ENCODE measurements at regions of chr5 and their contacts with region 1.

Region 1: GRCh38 chr5:134411546-134412266 is at the start of gene CDKN2AIPNL:
- DNase-seq: peak; percentile 34
- ATAC-seq: peak; percentile 99
- H3K4me3 ChIP-seq: peak within 1 kb of the TSS; percentile 85
- H3K27ac ChIP-seq: peak within 1 kb of the TSS; percentile 69
- H3K4me1 ChIP-seq: peaks cover 4% of the 10 kb centered on the region; the same call in 1 of the 2 replicates
- H3K27me3 ChIP-seq: no peaks in the 10 kb centered on the region
- CTCF ChIP-seq: peak; percentile 76 to 88 (median 81)
- EP300 ChIP-seq: peak in 1 of 2 experiments; percentile 46; a peak in 1 of 4 replicates
- POLR2A ChIP-seq: peak; percentile 94
- RAD21 ChIP-seq: peak; percentile 66
- polyA plus RNA-seq, gene CDKN2AIPNL: 23.5 to 29.9 TPM

Region 2: DNA sequence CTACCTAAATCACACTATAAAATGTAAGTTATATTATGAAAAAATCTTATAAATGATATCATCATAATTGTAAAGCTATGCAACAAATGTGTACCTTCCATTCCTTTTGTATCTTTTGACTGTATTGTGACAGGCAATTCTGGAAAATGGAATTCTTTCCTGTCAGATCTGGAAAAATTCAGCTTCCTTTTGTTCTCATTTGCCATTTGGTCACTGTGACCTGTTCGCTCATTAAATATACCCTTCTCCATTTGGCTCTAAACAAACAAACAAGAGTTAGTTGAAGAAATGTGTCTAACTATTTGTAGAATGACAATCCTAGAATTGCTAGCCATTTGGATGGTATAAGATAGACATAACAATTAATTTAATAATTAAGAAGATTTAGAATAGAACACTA is 107.4 kb before region 1 on chr5:
- CTCF ChIA-PET with region 1: interaction called, 10 read pairs
- POLR2A ChIA-PET with region 1: no interaction called
- RAD21 ChIA-PET with region 1: interaction called, 4 read pairs
- SMC1A ChIA-PET with region 1: interaction called, 3 read pairs
- in situ Hi-C with region 1: no loop called
- intact Hi-C with region 1: loop called (anchors 10 kb)
- DNase-seq: no peak
- ATAC-seq: no peak
- H3K4me3 ChIP-seq: no peak overlapping the region
- H3K27ac ChIP-seq: no peak overlapping the region
- H3K4me1 ChIP-seq: no peaks in the 10 kb centered on the region
- H3K27me3 ChIP-seq: no peaks in the 10 kb centered on the region
- CTCF ChIP-seq: no peak
- EP300 ChIP-seq: no peak
- POLR2A ChIP-seq: no peak
- RAD21 ChIP-seq: no peak

Region 3: GRCh38 chr5:134328619-134329018 is 83.1 kb before region 1 on chr5:
- CTCF ChIA-PET with region 1: no interaction called
- POLR2A ChIA-PET with region 1: no interaction called
- RAD21 ChIA-PET with region 1: no interaction called
- SMC1A ChIA-PET with region 1: no interaction called
- in situ Hi-C with region 1: no loop called
- intact Hi-C with region 1: no loop called
- DNase-seq: no peak
- ATAC-seq: no peak
- H3K4me3 ChIP-seq: no peak overlapping the region
- H3K27ac ChIP-seq: no peak overlapping the region
- H3K4me1 ChIP-seq: no peaks in the 10 kb centered on the region
- H3K27me3 ChIP-seq: no peaks in the 10 kb centered on the region; a peak in 1 of 4 replicates
- CTCF ChIP-seq: no peak
- EP300 ChIP-seq: no peak
- POLR2A ChIP-seq: no peak
- RAD21 ChIP-seq: no peak

Region 4: GRCh38 chr5:134394932-134395331 is 16.8 kb before region 1 on chr5:
- CTCF ChIA-PET with region 1: interaction called, 9 read pairs
- POLR2A ChIA-PET with region 1: interaction called, 5 read pairs
- RAD21 ChIA-PET with region 1: interaction called, 4 read pairs
- SMC1A ChIA-PET with region 1: interaction called, 11 read pairs
- in situ Hi-C with region 1: no loop called
- intact Hi-C with region 1: no loop called
- DNase-seq: no peak
- ATAC-seq: no peak
- H3K4me3 ChIP-seq: no peak overlapping the region
- H3K27ac ChIP-seq: no peak overlapping the region
- H3K4me1 ChIP-seq: no peaks in the 10 kb centered on the region
- H3K27me3 ChIP-seq: no peaks in the 10 kb centered on the region
- CTCF ChIP-seq: no peak
- EP300 ChIP-seq: no peak
- POLR2A ChIP-seq: no peak
- RAD21 ChIP-seq: no peak

Region 5: GRCh38 chr5:134436523-134437339 is 25.0 kb after region 1 on chr5:
- CTCF ChIA-PET with region 1: interaction called, 10 read pairs
- POLR2A ChIA-PET with region 1: interaction called, 16 read pairs
- RAD21 ChIA-PET with region 1: interaction called, 17 read pairs
- SMC1A ChIA-PET with region 1: interaction called, 15 read pairs
- in situ Hi-C with region 1: no loop called
- intact Hi-C with region 1: no loop called
- DNase-seq: peak; percentile 46
- ATAC-seq: peak; percentile 96
- H3K4me3 ChIP-seq: no peak overlapping the region
- H3K27ac ChIP-seq: peak overlapping the region; percentile 24; the same call in 1 of the 2 replicates
- H3K4me1 ChIP-seq: peaks cover 18% of the 10 kb centered on the region
- H3K27me3 ChIP-seq: no peaks in the 10 kb centered on the region
- CTCF ChIP-seq: no peak
- EP300 ChIP-seq: peak in 1 of 2 experiments; percentile 48; a peak in 1 of 4 replicates
- POLR2A ChIP-seq: no peak
- RAD21 ChIP-seq: no peak

Region 6: GRCh38 chr5:134555890-134556311 is 144.2 kb after region 1 on chr5:
- CTCF ChIA-PET with region 1: interaction called, 10 read pairs
- POLR2A ChIA-PET with region 1: interaction called, 7 read pairs
- RAD21 ChIA-PET with region 1: interaction called, 3 read pairs
- SMC1A ChIA-PET with region 1: interaction called, 5 read pairs
- in situ Hi-C with region 1: no loop called
- intact Hi-C with region 1: no loop called
- DNase-seq: no peak
- ATAC-seq: peak; percentile 66
- H3K4me3 ChIP-seq: no peak overlapping the region
- H3K27ac ChIP-seq: peak overlapping the region; percentile 91
- H3K4me1 ChIP-seq: peaks cover 42% of the 10 kb centered on the region
- H3K27me3 ChIP-seq: no peaks in the 10 kb centered on the region
- CTCF ChIP-seq: no peak
- EP300 ChIP-seq: no peak
- POLR2A ChIP-seq: no peak
- RAD21 ChIP-seq: no peak

Region 7: GRCh38 chr5:134637161-134637582 is 225.5 kb after region 1 on chr5:
- CTCF ChIA-PET with region 1: no interaction called
- POLR2A ChIA-PET with region 1: no interaction called
- RAD21 ChIA-PET with region 1: no interaction called
- SMC1A ChIA-PET with region 1: no interaction called
- in situ Hi-C with region 1: no loop called
- intact Hi-C with region 1: no loop called
- DNase-seq: no peak
- ATAC-seq: no peak
- H3K4me3 ChIP-seq: no peak overlapping the region
- H3K27ac ChIP-seq: no peak overlapping the region
- H3K4me1 ChIP-seq: peaks cover 8% of the 10 kb centered on the region
- H3K27me3 ChIP-seq: no peaks in the 10 kb centered on the region
- CTCF ChIP-seq: no peak
- EP300 ChIP-seq: no peak
- POLR2A ChIP-seq: no peak
- RAD21 ChIP-seq: no peak